PC-9 (cell line): ENCODE measurements at regions of chr17 and their contacts with region 1.

Region 1: GRCh38 chr17:30188211-30188939 is 47.1 kb downstream of the SLC6A4 start:
- DNase-seq: no peak
- H3K4me3 ChIP-seq: no peak overlapping the region
- H3K27ac ChIP-seq: no peak overlapping the region
- H3K4me1 ChIP-seq: no peaks in the 10 kb centered on the region
- H3K27me3 ChIP-seq: no peaks in the 10 kb centered on the region
- CTCF ChIP-seq: no peak

Region 2: DNA sequence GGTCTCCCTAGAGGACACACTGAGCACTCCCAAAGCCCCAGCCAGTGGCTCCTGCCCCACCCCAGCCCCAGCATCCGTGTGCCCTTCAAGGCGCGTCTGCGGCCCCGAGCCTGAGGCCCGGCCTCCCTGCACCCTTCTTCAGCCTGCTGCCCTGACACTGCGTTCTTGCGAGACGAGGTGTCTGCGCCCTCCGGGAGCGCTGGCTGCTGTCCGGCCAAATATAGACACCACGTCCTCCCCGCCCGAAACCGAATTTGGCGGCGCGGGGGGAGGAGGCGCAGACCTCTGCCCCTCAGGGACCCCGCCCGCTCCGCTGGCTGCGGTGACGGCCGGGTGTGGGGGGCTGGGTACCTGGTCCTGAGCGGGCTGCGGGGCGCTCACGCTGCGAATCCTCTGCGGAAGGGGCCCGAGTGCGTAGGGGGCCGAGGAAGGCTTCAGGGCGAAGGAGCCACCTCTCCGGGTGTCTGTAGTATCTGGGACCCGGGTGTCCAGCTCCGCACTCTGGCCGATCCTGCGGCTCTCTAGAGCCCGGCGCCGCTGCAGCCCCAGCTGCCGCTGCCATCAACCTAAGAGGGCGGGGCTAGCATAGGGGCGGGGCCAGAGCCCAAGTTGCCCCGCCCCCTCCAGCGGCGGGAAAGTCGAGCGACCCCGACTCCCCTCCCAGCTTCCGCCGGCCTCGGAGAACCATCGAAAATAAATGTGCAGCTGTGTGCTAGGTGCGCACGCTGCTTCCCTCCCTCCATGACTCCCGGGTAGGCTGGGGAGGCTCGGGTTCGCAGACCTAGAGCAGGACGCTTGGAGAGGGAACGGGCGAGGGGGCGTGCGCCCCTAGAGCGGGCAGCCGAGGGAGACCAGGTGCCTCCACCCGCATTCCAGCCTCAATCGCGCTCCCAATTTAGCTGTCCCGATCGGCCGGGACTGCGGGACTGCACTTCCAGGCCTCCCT is 565.8 kb before region 1 on chr17 and contains the start of gene CORO6:
- CTCF ChIA-PET with region 1: no interaction called
- POLR2A ChIA-PET with region 1: no interaction called
- intact Hi-C with region 1: no loop called
- DNase-seq: peak in 1 of 2 experiments; percentile 71
- H3K4me3 ChIP-seq: peak within 1 kb of the TSS; percentile 96
- H3K27ac ChIP-seq: peak within 1 kb of the TSS; percentile 36
- H3K4me1 ChIP-seq: peaks cover 58% of the 10 kb centered on the region
- H3K27me3 ChIP-seq: no peaks in the 10 kb centered on the region
- CTCF ChIP-seq: no peak
- total RNA-seq, gene CORO6: 35.0 and 52.1 TPM in 2 replicates

Region 3: GRCh38 chr17:30236766-30237165 is 48.4 kb after region 1 on chr17:
- CTCF ChIA-PET with region 1: interaction called, 16 read pairs
- POLR2A ChIA-PET with region 1: no interaction called
- intact Hi-C with region 1: no loop called
- DNase-seq: peak in 1 of 2 experiments; percentile 49
- H3K4me3 ChIP-seq: no peak overlapping the region
- H3K27ac ChIP-seq: no peak overlapping the region
- H3K4me1 ChIP-seq: no peaks in the 10 kb centered on the region
- H3K27me3 ChIP-seq: peaks cover 37% of the 10 kb centered on the region
- CTCF ChIP-seq: peak; percentile 27; the same call in 1 of the 2 replicates

Region 4: GRCh38 chr17:30395398-30396022 is 207.1 kb after region 1 on chr17:
- CTCF ChIA-PET with region 1: no interaction called
- POLR2A ChIA-PET with region 1: no interaction called
- intact Hi-C with region 1: no loop called
- DNase-seq: no peak
- H3K4me3 ChIP-seq: no peak overlapping the region
- H3K27ac ChIP-seq: no peak overlapping the region; the same call in 1 of the 2 replicates
- H3K4me1 ChIP-seq: 0 out of 2 replicates have a peak, but pooled peaks cover 10% of the 10 kb centered on the region
- H3K27me3 ChIP-seq: no peaks in the 10 kb centered on the region
- CTCF ChIP-seq: no peak

Region 5: DNA sequence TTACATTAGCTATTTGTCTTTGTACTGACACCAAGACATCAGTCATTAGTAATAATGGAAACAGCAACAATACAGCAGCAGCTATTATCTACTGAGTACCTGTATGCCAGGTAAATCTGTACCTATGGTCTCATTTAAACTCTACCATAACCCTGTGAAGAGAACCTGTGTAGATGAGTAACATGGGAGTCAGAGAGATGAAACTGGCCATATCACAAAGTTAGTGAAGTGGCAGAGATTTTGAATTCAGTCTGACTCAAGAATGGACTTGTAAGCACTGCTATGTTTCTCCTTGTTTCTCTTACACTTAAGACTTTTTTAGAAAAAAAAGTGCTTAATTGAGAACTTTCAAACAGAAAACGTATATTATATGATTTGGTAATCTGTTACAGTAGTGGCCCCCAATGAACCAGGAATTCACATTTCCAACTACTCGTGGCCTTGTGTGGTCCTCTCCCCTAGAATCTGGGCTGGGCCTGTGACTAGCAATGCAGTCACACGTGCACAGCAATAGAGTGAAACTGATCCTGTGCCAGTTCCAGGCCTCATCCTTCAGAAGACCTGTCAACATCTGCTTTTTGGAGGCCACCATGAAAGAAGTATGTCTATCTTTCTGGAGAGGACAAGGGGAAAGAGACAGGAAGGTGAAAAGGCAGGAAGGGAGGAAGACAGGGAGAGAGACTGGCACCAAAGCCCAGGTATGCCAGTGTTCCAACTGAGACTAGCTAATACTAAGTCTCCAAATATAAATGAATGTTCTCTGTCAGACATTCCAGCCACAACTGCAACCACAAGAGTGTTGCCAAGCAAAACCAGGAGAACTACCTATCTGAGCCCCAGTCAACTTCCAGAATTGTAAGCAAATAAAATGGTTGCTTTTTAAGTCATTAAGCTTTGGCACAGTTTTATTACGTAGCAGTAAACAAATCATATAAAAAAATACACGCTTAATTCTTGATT is 624.1 kb after region 1 on chr17:
- CTCF ChIA-PET with region 1: no interaction called
- POLR2A ChIA-PET with region 1: no interaction called
- intact Hi-C with region 1: no loop called
- DNase-seq: no peak
- H3K4me3 ChIP-seq: no peak overlapping the region
- H3K27ac ChIP-seq: no peak overlapping the region
- H3K4me1 ChIP-seq: no peaks in the 10 kb centered on the region; the same call in 1 of the 2 replicates
- H3K27me3 ChIP-seq: no peaks in the 10 kb centered on the region
- CTCF ChIP-seq: no peak